ENCODE measurements at regions of chr19 and their contacts with region 1.

Region 1: DNA sequence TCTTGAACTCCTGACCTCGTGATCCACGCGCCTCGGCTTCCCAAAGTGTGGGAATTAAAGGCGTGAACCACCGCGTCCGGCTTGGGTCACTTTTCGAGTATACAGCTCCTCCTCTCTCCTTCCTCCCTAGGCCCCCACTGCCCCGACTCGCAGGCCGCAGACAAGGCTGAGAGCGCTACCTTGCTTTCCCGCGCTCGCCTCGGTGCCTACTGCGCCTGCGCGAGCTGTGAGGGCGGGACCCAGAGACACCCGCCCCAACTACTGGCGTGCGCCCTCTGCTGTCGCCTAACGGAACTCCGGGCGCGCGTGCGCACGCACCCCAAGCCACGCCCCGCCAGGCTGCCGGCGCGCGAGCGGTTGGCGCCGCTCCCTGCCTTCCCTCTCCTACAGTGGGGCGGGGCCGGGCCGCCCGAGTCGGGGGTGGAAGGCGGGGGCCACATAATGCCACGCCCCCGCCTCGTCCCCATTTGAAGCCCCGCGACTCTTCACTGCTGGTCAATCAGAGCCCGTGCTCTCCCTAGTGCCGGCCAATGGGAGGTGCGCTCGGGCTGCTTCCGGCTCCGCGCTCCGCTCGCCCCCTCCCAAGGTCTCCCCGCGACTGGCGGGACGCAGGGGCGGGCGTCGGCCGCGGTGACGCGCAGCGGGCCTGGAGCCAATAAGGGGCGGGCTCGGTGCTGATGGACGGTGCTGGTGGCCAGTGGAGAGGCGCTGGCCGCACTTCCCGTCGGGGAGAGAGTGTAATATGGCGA is at the start of gene RAB8A:
- DNase-seq: peak; percentile 99 to 100
- ATAC-seq: peak; percentile 97 to 98 (median 97)
- H3K4me3 ChIP-seq: peak within 1 kb of the TSS; percentile 66
- H3K27ac ChIP-seq: peak within 1 kb of the TSS; percentile 83
- H3K4me1 ChIP-seq: peaks cover 10% of the 10 kb centered on the region
- H3K27me3 ChIP-seq: no peaks in the 10 kb centered on the region
- CTCF ChIP-seq: peak; percentile 96
- total RNA-seq, gene RAB8A: 8.0 to 12.4 (median 8.9) TPM

Region 2: DNA sequence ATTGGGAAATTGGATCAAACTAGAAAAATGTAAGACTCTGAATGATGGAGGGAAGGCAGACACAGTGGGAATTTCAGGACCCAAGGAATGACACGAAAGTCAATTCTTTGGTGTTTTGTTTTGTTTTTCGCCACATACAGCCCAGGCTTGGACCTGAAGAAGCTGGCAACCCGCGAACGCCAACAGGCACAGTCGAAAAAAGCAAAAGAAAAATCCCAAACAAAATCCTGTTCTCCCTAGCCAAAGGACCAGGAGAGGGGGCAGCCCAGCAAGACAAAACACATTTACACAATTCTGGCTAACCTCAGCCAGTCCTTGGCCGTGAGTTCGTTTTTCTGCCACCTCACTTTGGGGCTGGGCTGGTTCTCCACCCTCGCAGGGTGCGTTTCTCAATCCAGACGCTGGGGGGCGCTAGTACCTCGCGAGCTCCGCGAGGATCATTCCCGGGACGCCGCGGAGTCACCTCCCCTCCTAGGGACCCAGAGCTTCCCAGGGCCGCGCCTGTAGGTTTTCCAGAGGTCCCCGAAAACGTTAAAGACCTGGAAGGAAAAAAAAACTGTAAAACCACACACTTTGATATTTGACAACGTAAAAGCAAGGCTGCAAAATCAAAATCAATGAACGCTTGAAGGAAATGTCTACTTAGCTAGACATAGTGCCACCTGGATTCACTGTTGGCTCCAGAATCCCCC is 69.9 kb before region 1 on chr19:
- intact Hi-C with region 1: loop called in 1 of 2 experiments (anchors 5 kb)
- DNase-seq: peak; percentile 81 to 85
- ATAC-seq: peak; percentile 74 to 84 (median 82)
- H3K4me3 ChIP-seq: no peak overlapping the region
- H3K27ac ChIP-seq: no peak overlapping the region
- H3K4me1 ChIP-seq: no peaks in the 10 kb centered on the region
- H3K27me3 ChIP-seq: no peaks in the 10 kb centered on the region
- CTCF ChIP-seq: peak; percentile 91

Region 3: GRCh38 chr19:16134510-16134909 is 23.2 kb after region 1 on chr19:
- intact Hi-C with region 1: no loop called
- DNase-seq: no peak
- ATAC-seq: no peak
- H3K4me3 ChIP-seq: no peak overlapping the region
- H3K27ac ChIP-seq: no peak overlapping the region
- H3K4me1 ChIP-seq: no peaks in the 10 kb centered on the region
- H3K27me3 ChIP-seq: no peaks in the 10 kb centered on the region
- CTCF ChIP-seq: no peak

Region 4: GRCh38 chr19:16197622-16198369 is 86.5 kb after region 1 on chr19 and contains the start of gene AP1M1:
- intact Hi-C with region 1: loop called in 1 of 2 experiments (anchors 2 kb)
- DNase-seq: peak; percentile 99 to 100
- ATAC-seq: peak; percentile 94 to 97 (median 97)
- H3K4me3 ChIP-seq: peak within 1 kb of the TSS; percentile 100
- H3K27ac ChIP-seq: peak within 1 kb of the TSS; percentile 89
- H3K4me1 ChIP-seq: peaks cover 27% of the 10 kb centered on the region
- H3K27me3 ChIP-seq: no peaks in the 10 kb centered on the region
- CTCF ChIP-seq: no peak
- total RNA-seq, gene AP1M1: 40.5 to 51.5 (median 45.2) TPM